ENCODE measurements at regions of chr3 and their contacts with region 1.

Region 1: DNA sequence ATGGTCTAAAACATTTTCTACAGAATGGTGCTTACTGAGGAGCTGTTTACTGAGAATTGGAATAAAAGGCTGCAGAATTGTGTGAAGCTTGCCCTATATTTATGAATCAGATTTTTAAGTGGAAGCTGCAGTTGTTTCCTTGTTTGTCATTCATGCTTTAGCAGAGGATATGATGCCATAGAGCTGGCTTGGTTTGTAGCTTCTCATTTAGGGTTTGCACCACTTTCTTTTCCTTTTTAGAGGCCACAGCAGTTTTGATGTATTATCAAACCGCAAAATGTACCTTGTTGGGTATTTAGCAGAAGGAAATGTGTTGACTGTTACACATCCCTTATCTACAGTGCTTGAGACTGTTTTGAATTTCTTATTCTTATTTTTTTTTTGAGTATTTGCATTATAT is 66.2 kb downstream of the RASA2 start:
- DNase-seq: no peak

Region 2: DNA sequence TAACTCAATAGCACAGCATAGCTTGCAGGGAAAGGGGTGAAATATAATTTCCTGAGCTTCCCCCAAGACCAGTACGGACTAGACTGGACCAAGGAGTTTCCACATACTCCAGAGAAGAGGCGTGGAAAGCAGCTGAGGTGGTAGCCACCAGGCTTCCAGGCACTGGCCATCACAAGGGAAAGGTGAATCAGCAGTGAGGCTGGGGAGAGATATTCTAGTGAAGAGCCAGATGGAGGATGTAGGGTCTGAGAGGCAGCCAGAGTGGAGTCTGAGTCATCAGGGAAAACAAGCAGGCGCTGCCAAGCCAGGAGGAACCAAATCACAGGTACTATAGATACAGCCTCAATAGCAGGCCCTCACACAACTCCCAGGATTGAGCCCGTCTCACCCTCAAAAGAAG is 75.8 kb before region 1 on chr3:
- intact Hi-C with region 1: loop called (anchors 10 kb)
- DNase-seq: no peak

Region 3: GRCh38 chr3:141769221-141769894 is 216.3 kb after region 1 on chr3:
- intact Hi-C with region 1: no loop called
- DNase-seq: no peak

Region 4: DNA sequence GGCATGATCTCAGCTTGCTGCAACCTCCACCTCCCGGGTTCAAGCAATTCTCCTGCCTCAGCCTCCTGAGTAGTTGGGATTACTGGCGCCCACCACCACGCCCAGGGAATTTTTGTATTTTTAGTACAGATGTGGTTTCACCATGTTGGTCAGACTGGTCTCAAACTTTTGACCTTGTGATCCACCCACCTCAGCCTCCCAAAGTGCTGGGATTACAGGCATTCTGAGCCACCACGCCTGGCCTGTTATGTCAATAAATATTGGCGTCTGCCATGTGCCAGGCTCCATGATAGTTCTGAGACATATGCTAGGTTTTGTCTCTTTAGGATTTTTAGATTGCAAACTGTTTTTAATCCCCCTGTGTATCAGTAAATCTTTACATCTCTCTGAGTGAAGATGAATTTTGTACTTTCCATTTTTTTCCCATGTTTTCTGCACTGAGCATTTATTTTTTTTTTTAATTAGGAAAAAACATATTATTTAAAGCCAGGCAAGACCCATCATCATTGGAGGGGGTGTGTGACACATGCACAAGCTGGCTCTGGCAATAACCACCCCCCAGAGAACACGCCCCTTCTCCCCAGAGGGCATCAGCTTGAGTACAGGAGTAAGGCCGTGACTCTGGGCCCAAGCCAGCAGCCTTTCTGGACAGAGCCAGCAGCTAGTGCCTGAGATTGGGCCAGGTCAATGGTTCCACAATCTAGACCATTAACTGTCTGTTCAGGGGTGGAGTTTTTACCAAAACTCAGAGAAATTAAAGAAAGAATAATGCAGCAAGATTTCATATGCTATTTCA is 272.4 kb after region 1 on chr3:
- intact Hi-C with region 1: no loop called
- DNase-seq: no peak